ENCODE measurements at regions of chrX and their contacts with region 1.

Region 1: GRCh38 chrX:48539345-48540027 is at the start of gene TBC1D25:
- DNase-seq: peak; percentile 96 to 98 (median 98)
- H3K4me3 ChIP-seq: peak within 1 kb of the TSS; percentile 54 to 71 (median 71)
- H3K4me3 Mint-ChIP-seq: peak within 1 kb of the TSS; percentile 80 to 85
- H3K27ac ChIP-seq: peak within 1 kb of the TSS; percentile 86 to 90
- H3K27ac Mint-ChIP-seq: peak within 1 kb of the TSS; percentile 89 to 96 (median 94)
- H3K4me1 ChIP-seq: peaks cover 19 to 30% of the 10 kb centered on the region in 2 donors
- H3K4me1 Mint-ChIP-seq: peaks cover 25% of the 10 kb centered on the region
- H3K27me3 ChIP-seq: no peaks in the 10 kb centered on the region
- H3K27me3 Mint-ChIP-seq: peaks cover 0 to 6% (median 2%) of the 10 kb centered on the region in 3 donors
- CTCF ChIP-seq: peak; percentile 50
- polyA plus RNA-seq, gene TBC1D25: 5.7 to 16.9 (median 6.6) TPM

Region 2: DNA sequence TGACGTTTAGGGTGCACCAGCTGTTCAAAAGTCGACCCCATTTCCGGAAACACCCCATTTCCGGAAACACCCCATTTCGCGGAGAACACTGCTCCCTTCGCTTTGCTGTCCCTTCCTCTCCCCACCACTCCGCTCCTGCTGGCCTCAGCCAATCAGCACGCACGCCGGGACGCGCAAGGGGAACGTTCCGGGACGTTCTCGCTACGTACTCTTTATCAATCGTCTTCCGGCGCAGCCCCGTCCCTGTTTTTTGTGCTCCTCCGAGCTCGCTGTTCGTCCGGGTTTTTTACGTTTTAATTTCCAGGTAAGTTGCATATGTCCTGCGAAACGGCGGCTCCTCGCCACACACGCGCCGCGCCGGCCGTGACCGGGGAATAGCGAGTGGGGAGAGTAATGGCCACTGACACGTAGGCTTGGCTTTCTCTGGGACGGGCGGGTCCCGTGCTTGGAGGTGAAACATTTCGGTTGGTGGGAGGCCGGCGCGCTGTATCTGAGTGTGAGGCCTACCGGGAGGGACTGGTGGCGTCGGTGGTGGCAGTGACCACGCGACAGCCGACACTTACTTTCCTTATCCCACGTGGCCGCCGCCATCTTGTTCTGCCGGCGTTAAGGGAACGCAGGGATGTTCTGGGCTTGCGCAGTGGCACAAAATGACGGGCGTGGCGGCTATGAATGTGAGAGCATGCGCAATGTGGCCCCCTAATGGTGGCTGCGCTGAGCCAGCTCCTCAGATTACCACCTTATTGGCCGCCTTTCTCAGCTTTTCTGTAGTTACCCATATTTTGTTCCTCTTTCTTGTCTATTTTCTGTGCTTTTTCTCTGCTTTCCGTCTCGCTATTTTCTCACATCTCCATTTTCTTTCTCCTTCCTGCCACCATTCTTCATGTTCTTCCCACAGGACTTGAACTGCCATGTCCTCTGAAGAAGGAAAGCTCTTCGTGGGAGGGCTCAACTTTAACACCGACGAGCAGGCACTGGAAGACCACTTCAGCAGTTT is 35.1 kb after region 1 on chrX and contains the start of gene RBM3:
- intact Hi-C with region 1: loop called (anchors 1 to 5 kb)
- DNase-seq: peak; percentile 89 to 96 (median 95)
- H3K4me3 ChIP-seq: peak within 1 kb of the TSS; percentile 58 to 91 (median 82)
- H3K4me3 Mint-ChIP-seq: peak within 1 kb of the TSS; percentile 92 to 96
- H3K27ac ChIP-seq: peak within 1 kb of the TSS; percentile 99 to 100
- H3K27ac Mint-ChIP-seq: peak within 1 kb of the TSS; percentile 97 to 100 (median 100)
- H3K4me1 ChIP-seq: peaks cover 14 to 20% of the 10 kb centered on the region in 2 donors
- H3K4me1 Mint-ChIP-seq: peaks cover 16% of the 10 kb centered on the region
- H3K27me3 ChIP-seq: no peaks in the 10 kb centered on the region
- H3K27me3 Mint-ChIP-seq: peaks cover 0 to 3% (median 0%) of the 10 kb centered on the region in 3 donors
- CTCF ChIP-seq: peak; percentile 23
- polyA plus RNA-seq, gene RBM3: 187 to 302 (median 203) TPM